CD4-positive, alpha-beta memory T cell (primary cell): ENCODE measurements at regions of chr4 and their contacts with region 1.

Region 1: DNA sequence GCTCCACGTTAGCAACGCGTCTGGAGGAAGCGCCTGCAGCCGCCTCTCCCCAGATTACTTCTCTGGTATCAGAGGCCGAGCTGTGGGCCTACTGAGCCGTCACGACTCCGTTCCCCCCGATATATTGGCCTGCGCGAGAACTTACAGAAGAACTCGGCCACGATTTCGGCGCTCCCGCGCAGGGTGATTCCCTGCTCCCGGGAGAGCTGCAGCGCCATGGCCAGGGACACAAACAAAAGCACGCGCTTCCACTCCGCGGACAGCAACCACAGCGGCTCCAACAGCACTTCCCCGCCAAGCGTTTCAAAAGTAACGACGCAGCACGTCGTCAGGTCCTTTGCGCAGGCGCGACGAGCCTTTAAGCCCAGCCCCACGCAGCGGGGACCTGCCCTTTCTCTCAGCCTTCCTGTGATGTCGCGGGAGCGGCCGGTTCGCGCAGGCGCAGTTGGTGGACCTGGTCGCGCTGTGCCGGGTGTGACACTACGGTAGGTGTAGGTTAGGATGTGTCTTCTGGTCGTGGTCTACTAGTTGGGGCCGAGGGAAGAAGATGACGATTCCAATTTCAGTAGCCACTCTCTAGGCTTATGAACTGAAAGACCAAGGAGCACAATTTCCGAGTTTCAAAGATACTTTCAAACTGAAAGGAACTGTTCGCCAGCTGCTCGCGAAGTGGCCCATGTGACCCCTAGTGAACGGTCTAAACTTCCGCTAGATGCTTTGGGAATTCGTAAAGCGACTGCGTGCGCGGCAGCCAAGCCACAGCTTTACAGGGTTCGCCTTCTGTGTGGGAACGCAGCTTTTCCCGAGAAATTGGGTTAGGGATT is at the start of gene MAD2L1:
- DNase-seq: peak; percentile 98 to 99 (median 99)
- H3K4me3 ChIP-seq: peak within 1 kb of the TSS; percentile 83 to 94
- H3K4me3 Mint-ChIP-seq: peak within 1 kb of the TSS; percentile 89 to 99 (median 96)
- H3K27ac ChIP-seq: peak within 1 kb of the TSS; percentile 98
- H3K27ac Mint-ChIP-seq: peak within 1 kb of the TSS; percentile 96 to 99 (median 99)
- H3K4me1 ChIP-seq: peaks cover 55% of the 10 kb centered on the region
- H3K4me1 Mint-ChIP-seq: peaks cover 39 to 75% (median 52%) of the 10 kb centered on the region in 4 donors
- H3K27me3 ChIP-seq: no peaks in the 10 kb centered on the region
- H3K27me3 Mint-ChIP-seq: no peaks in the 10 kb centered on the region
- total RNA-seq, gene MAD2L1: 8.0 to 9.9 TPM

Region 2: DNA sequence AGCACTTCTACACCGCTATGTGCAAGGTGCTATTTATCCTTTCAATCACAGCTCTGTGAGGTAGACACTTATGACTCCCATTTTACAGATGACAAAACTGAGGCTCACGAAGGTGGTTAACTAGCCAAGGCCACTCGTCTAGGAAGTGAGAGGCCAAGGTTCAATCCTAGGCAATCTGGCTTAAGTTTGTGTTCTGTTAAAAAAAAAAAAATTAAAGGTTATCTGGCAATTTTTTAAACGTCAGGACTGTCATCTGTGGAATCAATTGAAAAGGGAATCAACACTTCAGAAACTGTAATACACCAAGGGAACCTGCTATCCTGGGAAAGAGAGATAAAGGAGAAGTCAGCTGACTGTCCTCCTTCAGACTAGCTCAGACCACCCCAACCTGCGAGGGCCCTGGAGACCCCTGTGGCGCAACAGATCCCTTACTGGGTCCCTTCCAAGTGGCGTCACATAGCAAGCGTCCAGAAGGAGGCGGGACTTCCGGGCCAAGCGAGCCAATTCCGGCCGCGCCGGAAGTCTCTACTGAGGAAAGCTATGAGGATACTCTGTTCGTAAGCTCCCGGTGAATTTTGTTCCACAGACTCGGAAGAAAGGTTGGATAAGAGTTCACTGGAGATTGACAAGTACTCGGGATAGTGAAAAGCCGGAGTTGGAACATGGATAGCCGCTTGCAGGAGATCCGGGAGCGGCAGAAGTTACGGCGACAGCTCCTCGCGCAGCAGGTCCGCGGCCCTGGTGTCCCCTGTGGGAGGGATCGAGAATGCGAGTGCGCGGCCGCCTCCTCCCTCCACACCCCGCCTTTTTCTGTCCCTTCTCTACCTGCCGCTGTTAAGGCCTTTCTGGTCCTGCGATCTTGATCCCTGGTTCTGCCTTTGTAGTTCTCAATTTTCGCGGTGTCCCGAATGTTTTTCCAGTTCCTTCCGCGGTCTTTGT is 1381.6 kb before region 1 on chr4 and contains the start of gene METTL14:
- CTCF ChIA-PET with region 1: no interaction called
- POLR2A ChIA-PET with region 1: no interaction called
- intact Hi-C with region 1: loop called (anchors 1 kb)
- DNase-seq: peak; percentile 83 to 87 (median 83)
- H3K4me3 ChIP-seq: peak within 1 kb of the TSS; percentile 60 to 87
- H3K4me3 Mint-ChIP-seq: peak within 1 kb of the TSS; percentile 94 to 98 (median 97)
- H3K27ac ChIP-seq: peak within 1 kb of the TSS; percentile 80
- H3K27ac Mint-ChIP-seq: peak within 1 kb of the TSS; percentile 85 to 99 (median 98)
- H3K4me1 ChIP-seq: peaks cover 27% of the 10 kb centered on the region
- H3K4me1 Mint-ChIP-seq: peaks cover 20 to 31% (median 25%) of the 10 kb centered on the region in 4 donors
- H3K27me3 ChIP-seq: no peaks in the 10 kb centered on the region
- H3K27me3 Mint-ChIP-seq: no peaks in the 10 kb centered on the region
- total RNA-seq, gene METTL14: 67.2 to 70.5 TPM

Region 3: DNA sequence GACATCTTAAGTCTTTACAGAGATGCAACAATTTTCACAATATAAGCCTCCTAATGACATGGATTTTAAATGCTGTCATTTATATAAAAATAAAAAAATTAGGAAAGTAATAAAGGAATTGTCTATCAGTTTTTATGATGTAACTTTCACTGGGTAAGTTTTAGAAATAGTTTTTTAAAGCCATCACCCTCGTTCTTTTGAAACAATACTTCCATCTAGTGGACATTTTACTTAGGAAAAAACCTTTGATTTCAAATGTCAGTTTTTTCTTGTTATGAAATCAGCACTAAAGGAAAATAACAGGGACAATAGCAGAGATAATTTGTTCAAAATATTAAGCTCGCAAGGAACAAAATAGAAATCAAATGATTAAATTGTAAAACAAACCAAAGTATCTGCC is 1029.9 kb after region 1 on chr4:
- CTCF ChIA-PET with region 1: no interaction called
- POLR2A ChIA-PET with region 1: no interaction called
- intact Hi-C with region 1: loop called (anchors 1 kb)
- DNase-seq: peak in 4 of 5 donors; percentile 10 to 27 (median 22)
- H3K4me3 ChIP-seq: no peak overlapping the region
- H3K4me3 Mint-ChIP-seq: no peak overlapping the region
- H3K27ac ChIP-seq: no peak overlapping the region
- H3K27ac Mint-ChIP-seq: no peak overlapping the region
- H3K4me1 ChIP-seq: no peaks in the 10 kb centered on the region
- H3K4me1 Mint-ChIP-seq: peaks cover 0 to 4% (median 0%) of the 10 kb centered on the region in 4 donors
- H3K27me3 ChIP-seq: no peaks in the 10 kb centered on the region
- H3K27me3 Mint-ChIP-seq: no peaks in the 10 kb centered on the region